Endothelial cell of umbilical vein (primary cell): ENCODE measurements at regions of chr2 and their contacts with region 1.

Region 1: DNA sequence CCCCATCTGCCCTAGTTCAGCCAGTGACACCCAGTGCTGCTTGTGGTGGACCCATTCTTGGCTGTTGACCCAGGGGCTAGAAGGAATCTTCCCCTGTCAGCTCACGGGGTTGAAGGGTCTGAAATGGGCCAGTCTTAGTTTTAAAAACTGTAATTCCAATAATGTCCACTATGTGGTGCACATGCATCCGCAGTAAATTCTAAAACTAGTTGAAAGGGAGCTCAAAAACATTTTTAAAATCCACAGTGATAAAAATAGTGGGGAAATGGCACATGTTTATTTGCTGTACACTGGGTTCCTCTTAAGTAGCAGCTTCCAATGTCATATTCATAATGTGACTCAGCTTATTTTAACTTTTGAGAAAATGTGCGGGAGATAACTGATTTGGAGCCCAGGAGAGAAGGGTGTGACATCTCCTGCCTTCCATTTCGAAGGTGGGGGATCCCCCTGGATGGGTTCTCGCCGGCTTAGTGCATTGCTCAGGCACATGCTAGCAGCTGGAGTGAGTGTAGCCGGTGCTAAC is 32.8 kb downstream of the GRHL1 start:
- DNase-seq: peak; percentile 73
- H3K4me3 ChIP-seq: no peak overlapping the region
- H3K27ac ChIP-seq: no peak overlapping the region
- H3K4me1 ChIP-seq: peaks cover 5% of the 10 kb centered on the region
- H3K27me3 ChIP-seq: no peaks in the 10 kb centered on the region
- CTCF ChIP-seq: peak; percentile 46 to 60
- POLR2A ChIP-seq: no peak

Region 2: DNA sequence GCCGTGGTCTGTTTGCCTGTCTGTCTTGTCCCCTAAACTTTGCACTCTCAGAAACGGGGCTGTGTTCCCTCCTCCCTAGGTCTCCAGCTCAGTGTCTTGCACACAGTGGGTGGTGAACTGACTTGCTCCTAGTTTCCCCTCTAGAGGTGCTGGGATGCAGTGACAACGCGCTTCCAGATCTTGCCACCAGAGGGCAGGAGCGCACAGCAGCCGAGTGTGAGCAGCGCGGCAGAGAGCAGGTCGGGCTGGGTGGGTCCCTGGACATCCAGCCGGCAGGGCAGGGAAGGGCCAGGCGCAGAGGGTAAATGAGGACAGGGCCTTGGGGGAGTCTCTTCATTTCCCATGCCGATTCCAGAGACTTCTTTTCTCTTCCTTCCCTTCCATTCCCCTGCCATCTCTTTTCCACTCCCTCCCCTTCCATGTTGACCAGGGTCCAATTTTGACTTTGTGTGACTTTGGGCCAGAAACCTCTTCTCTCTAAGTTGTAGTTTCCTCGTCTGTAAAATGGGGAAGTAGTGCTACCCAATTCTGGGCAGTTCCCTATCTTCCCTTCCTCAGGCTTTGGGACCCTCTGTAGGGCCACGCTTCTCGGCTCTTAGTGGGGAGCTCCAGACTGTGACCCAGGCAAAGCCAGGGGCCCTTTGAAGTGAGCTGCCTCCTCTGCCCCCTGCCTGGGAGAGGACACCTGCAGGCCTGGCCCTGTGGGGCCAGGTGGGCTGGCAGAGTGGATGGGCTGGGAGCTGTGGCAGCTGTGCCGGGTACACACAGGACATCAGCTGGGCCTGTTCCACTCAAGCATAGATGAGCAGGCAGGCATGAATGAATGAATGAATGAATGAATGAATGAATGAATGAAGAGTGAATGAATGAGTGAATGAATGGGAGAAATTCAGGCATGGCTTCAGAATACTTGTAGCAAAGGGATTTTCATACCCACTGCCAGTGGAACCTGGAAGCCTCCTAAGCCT is 184.3 kb before region 1 on chr2:
- CTCF ChIA-PET with region 1: interaction called, 15 read pairs
- POLR2A ChIA-PET with region 1: no interaction called
- dilution Hi-C with region 1: no loop called
- intact Hi-C with region 1: no loop called
- DNase-seq: peak; percentile 82
- H3K4me3 ChIP-seq: no peak overlapping the region
- H3K27ac ChIP-seq: no peak overlapping the region
- H3K4me1 ChIP-seq: no peaks in the 10 kb centered on the region
- H3K27me3 ChIP-seq: no peaks in the 10 kb centered on the region
- CTCF ChIP-seq: peak; percentile 96 to 99
- POLR2A ChIP-seq: no peak

Region 3: GRCh38 chr2:9937968-9938367 is 46.3 kb before region 1 on chr2:
- CTCF ChIA-PET with region 1: interaction called, 12 read pairs
- POLR2A ChIA-PET with region 1: no interaction called
- dilution Hi-C with region 1: no loop called
- intact Hi-C with region 1: no loop called
- DNase-seq: no peak
- H3K4me3 ChIP-seq: no peak overlapping the region
- H3K27ac ChIP-seq: no peak overlapping the region
- H3K4me1 ChIP-seq: no peaks in the 10 kb centered on the region
- H3K27me3 ChIP-seq: no peaks in the 10 kb centered on the region
- CTCF ChIP-seq: no peak
- POLR2A ChIP-seq: no peak

Region 4: DNA sequence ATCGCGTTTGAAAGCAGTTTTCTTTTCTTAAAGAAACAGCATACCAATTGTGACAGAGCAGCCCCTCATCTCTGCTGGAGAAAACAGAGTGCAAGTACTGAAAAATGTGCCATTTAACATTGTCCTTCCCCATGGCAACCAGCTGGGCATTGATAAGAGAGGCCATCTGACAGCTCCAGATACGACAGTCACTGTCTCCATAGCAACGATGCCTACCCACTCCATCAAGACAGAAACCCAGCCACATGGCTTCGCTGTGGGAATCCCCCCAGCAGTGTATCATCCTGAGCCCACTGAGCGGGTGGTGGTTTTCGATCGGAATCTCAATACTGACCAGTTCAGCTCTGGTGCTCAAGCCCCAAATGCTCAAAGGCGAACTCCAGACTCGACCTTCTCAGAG is 23.3 kb before region 1 on chr2:
- CTCF ChIA-PET with region 1: interaction called, 13 read pairs
- POLR2A ChIA-PET with region 1: no interaction called
- dilution Hi-C with region 1: no loop called
- intact Hi-C with region 1: no loop called
- DNase-seq: no peak
- H3K4me3 ChIP-seq: no peak overlapping the region
- H3K27ac ChIP-seq: no peak overlapping the region
- H3K4me1 ChIP-seq: no peaks in the 10 kb centered on the region
- H3K27me3 ChIP-seq: no peaks in the 10 kb centered on the region
- CTCF ChIP-seq: no peak
- POLR2A ChIP-seq: no peak

Region 5: DNA sequence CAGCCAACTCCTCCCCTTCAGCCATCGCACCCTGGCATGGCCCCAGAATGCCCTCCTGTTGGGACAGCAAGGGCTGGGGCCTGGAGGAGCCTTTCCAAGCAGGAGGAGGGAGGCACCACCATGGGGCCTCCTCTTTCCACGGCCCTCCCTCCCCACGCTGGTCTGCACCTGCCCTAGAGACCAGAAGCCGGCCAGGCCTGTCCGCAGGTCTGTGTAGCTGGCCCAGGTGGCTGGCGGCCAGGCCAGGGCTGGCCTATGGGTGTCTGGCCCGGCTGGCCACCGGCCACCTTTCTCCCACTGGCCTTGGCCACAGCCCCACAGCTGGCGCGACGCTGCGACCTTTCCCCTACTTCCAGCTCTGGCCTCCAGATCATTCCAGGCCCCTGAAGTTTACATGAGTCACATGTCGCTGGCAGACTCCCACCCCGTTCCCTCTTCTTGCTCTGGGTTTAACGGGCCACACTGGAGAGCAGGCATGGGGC is 25.6 kb after region 1 on chr2:
- CTCF ChIA-PET with region 1: interaction called, 53 read pairs
- POLR2A ChIA-PET with region 1: no interaction called
- dilution Hi-C with region 1: no loop called
- intact Hi-C with region 1: no loop called
- DNase-seq: no peak
- H3K4me3 ChIP-seq: no peak overlapping the region
- H3K27ac ChIP-seq: no peak overlapping the region
- H3K4me1 ChIP-seq: no peaks in the 10 kb centered on the region
- H3K27me3 ChIP-seq: no peaks in the 10 kb centered on the region
- CTCF ChIP-seq: no peak
- POLR2A ChIP-seq: no peak

Region 6: GRCh38 chr2:10043906-10044601 is 59.8 kb after region 1 on chr2:
- CTCF ChIA-PET with region 1: interaction called, 340 read pairs
- POLR2A ChIA-PET with region 1: interaction called, 3 read pairs
- dilution Hi-C with region 1: no loop called
- intact Hi-C with region 1: loop called (anchors 1 kb)
- DNase-seq: peak; percentile 92
- H3K4me3 ChIP-seq: peak overlapping the region in 2 of 3 experiments; percentile 31 to 75
- H3K27ac ChIP-seq: peak overlapping the region; percentile 70
- H3K4me1 ChIP-seq: peaks cover 4% of the 10 kb centered on the region
- H3K27me3 ChIP-seq: no peaks in the 10 kb centered on the region
- CTCF ChIP-seq: no peak
- POLR2A ChIP-seq: no peak